Psoas muscle (tissue), 8 donors: ENCODE measurements at regions of chr12 and their contacts with region 1.

Region 1: GRCh38 chr12:109239179-109239578 is 69.9 kb downstream of the FOXN4 start:
- DNase-seq: no peak
- ATAC-seq: peak in 3 of 4 donors; percentile 2 to 9 (median 3)
- H3K4me3 ChIP-seq: no peak overlapping the region
- H3K27ac ChIP-seq: no peak overlapping the region
- H3K4me1 ChIP-seq: no peaks in the 10 kb centered on the region
- H3K27me3 ChIP-seq: no peaks in the 10 kb centered on the region
- CTCF ChIP-seq: no peak

Region 2: GRCh38 chr12:109170324-109170723 is 68.9 kb before region 1 on chr12:
- intact Hi-C with region 1: loop called in 1 of 2 experiments (anchors 10 kb)
- DNase-seq: no peak
- ATAC-seq: peak in 1 of 4 donors; percentile 5
- H3K4me3 ChIP-seq: no peak overlapping the region
- H3K27ac ChIP-seq: peak overlapping the region; percentile 25
- H3K4me1 ChIP-seq: no peaks in the 10 kb centered on the region
- H3K27me3 ChIP-seq: no peaks in the 10 kb centered on the region
- CTCF ChIP-seq: no peak

Region 3: GRCh38 chr12:109288571-109288970 is 49.4 kb after region 1 on chr12:
- intact Hi-C with region 1: no loop called
- DNase-seq: no peak
- ATAC-seq: no peak
- H3K4me3 ChIP-seq: no peak overlapping the region
- H3K27ac ChIP-seq: no peak overlapping the region
- H3K4me1 ChIP-seq: peaks cover 4% of the 10 kb centered on the region
- H3K27me3 ChIP-seq: peaks cover 0 to 3% (median 0%) of the 10 kb centered on the region in 3 donors
- CTCF ChIP-seq: no peak

Region 4: GRCh38 chr12:109497675-109498074 is 258.5 kb after region 1 on chr12:
- intact Hi-C with region 1: loop called in 1 of 2 experiments (anchors 10 kb)
- DNase-seq: no peak
- ATAC-seq: no peak
- H3K4me3 ChIP-seq: no peak overlapping the region
- H3K27ac ChIP-seq: no peak overlapping the region
- H3K4me1 ChIP-seq: no peaks in the 10 kb centered on the region
- H3K27me3 ChIP-seq: no peaks in the 10 kb centered on the region
- CTCF ChIP-seq: no peak